ENCODE measurements at regions of chr17 and their contacts with region 1.

Region 1: GRCh38 chr17:75927286-75927922 is 13.4 kb downstream of the FBF1 start:
- DNase-seq: no peak
- H3K4me3 ChIP-seq: no peak overlapping the region
- CTCF ChIP-seq: peak; percentile 20

Region 2: DNA sequence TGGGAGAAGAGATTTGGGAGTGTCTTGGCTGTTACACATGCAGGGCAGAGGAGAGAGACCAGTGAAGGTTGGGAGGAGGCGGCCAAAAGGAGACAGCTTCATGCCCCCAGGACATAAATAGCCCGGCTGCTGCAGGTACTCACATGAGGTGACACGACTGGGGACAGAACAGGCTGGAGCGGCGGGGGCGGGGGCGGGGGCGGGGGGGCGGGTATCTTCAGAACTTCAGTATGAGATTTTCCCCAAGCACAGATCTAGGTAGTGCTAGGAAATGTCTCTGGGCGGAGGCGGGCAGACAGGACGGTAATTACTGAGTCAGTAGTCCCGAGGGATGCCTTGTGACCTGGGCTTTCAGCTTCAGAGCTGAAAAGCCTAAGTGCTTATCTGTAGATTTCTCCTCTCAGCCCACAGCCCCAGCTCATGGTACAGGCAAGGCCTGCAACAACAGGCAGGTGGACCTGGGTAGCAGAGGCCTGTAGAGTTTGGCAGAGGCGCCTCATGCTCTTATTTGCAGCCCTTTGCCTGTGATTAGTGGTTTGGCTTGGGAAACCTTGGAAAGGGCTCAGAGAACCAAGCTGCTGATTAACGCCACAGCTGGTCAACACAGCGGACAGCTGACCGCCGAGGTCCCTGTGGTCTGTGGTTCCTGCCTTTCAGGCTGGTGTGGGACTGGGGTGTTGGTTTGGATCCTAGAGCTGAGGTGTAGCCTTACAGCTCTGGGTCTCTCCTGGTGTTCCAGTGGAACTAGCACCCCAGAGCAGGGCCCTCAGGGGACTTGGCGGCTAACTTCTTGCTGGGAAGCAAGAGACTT is 118.3 kb before region 1 on chr17:
- CTCF ChIA-PET with region 1: no interaction called
- POLR2A ChIA-PET with region 1: no interaction called
- DNase-seq: no peak
- H3K4me3 ChIP-seq: no peak overlapping the region
- CTCF ChIP-seq: no peak

Region 3: GRCh38 chr17:75845049-75845860 is 82.1 kb before region 1 on chr17:
- CTCF ChIA-PET with region 1: no interaction called
- POLR2A ChIA-PET with region 1: no interaction called
- DNase-seq: no peak
- H3K4me3 ChIP-seq: no peak overlapping the region
- CTCF ChIP-seq: peak; percentile 74

Region 4: DNA sequence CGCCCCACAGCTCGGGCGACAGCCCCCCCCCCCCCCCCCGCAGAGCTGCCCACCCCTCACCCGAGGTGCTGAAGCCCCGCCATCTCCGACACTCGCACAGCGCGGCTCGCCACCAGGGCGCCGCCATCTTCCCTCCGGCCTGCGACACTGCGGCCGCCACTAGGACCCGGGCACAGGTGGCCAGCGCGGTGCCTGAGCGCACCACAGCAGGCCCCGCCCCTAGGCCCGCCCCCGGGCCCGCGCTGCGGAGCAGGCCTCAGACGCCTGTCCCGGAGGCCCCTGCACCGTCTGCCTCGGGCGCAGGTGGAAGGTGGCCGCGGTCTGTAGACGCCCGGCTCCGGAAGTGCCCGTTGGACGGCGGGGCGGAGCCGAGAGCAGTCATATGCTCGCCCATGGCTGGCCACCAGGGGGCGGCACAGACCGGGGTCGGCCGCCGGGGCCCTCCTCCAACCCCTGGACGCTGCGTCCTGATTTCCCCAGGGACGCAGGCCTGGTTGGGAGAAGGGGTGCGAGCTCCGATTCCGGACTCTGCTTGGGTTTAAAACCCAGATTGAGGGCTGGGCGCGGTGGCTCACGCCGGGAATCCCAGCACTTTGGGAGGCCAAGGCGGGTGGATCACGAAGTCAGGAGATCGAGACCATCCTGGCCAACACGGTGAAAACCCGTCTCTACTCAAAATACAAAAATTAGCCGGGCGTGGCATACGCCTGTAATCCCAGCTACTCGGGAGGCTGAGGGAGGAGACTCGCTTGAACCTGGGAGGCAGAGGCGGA is 22.5 kb before region 1 on chr17 and contains the start of gene MRPL38:
- CTCF ChIA-PET with region 1: interaction called, 33 read pairs
- POLR2A ChIA-PET with region 1: no interaction called
- DNase-seq: peak; percentile 40
- H3K4me3 ChIP-seq: peak within 1 kb of the TSS; percentile 75
- CTCF ChIP-seq: peak; percentile 95

Measured in AG04449 (cell line).